ENCODE measurements at regions of chr17 and their contacts with region 1.

Region 1: GRCh38 chr17:47698749-47699535 is 5.0 kb downstream of the TBKBP1 start:
- DNase-seq: peak in 1 of 2 experiments; percentile 92
- H3K4me3 ChIP-seq: no peak overlapping the region
- H3K27ac ChIP-seq: no peak overlapping the region
- H3K4me1 ChIP-seq: peaks cover 0 to 9% (median 7%) of the 10 kb centered on the region in 4 experiments; a peak in 6 of 7 replicates
- H3K27me3 ChIP-seq: no peaks in the 10 kb centered on the region; a peak in 1 of 7 replicates
- CTCF ChIP-seq: peak; percentile 80 to 93 (median 91)
- EP300 ChIP-seq: no peak
- POLR2A ChIP-seq: no peak
- RAD21 ChIP-seq: peak; percentile 76 to 84

Region 2: GRCh38 chr17:47687748-47688147 is 11.2 kb before region 1 on chr17:
- CTCF ChIA-PET with region 1: interaction called, 36 read pairs
- POLR2A ChIA-PET with region 1: interaction called, 1,575 read pairs
- DNase-seq: peak in 1 of 2 experiments; percentile 63
- H3K4me3 ChIP-seq: no peak overlapping the region
- H3K27ac ChIP-seq: no peak overlapping the region
- H3K4me1 ChIP-seq: peaks cover 10 to 16% (median 13%) of the 10 kb centered on the region in 4 experiments
- H3K27me3 ChIP-seq: no peaks in the 10 kb centered on the region
- CTCF ChIP-seq: no peak
- EP300 ChIP-seq: no peak
- POLR2A ChIP-seq: 0 out of 3 replicates have a peak, but pooled peaks of 1 of the 2 experiments have one; percentile 32
- RAD21 ChIP-seq: 0 out of 4 replicates have a peak, but pooled peaks of 1 of the 2 experiments have one; percentile 2

Region 3: GRCh38 chr17:47708863-47709541 is 10.1 kb after region 1 on chr17:
- CTCF ChIA-PET with region 1: interaction called, 146 read pairs
- POLR2A ChIA-PET with region 1: interaction called, 4 read pairs
- DNase-seq: peak in 1 of 2 experiments; percentile 67
- H3K4me3 ChIP-seq: peak overlapping the region; percentile 21 to 57 (median 29); a peak in 7 of 8 replicates
- H3K27ac ChIP-seq: no peak overlapping the region
- H3K4me1 ChIP-seq: peaks cover 0 to 9% (median 3%) of the 10 kb centered on the region in 4 experiments; a peak in 5 of 7 replicates
- H3K27me3 ChIP-seq: peaks cover 0 to 19% (median 5%) of the 10 kb centered on the region in 4 experiments; a peak in 4 of 7 replicates
- CTCF ChIP-seq: no peak
- EP300 ChIP-seq: no peak
- POLR2A ChIP-seq: no peak
- RAD21 ChIP-seq: no peak

Region 4: GRCh38 chr17:47720754-47721533 is 22.0 kb after region 1 on chr17:
- CTCF ChIA-PET with region 1: interaction called, 441 read pairs
- POLR2A ChIA-PET with region 1: interaction called, 5 read pairs
- DNase-seq: peak in 1 of 2 experiments; percentile 69
- H3K4me3 ChIP-seq: peak overlapping the region in 1 of 4 experiments; percentile 46; a peak in 4 of 8 replicates
- H3K27ac ChIP-seq: no peak overlapping the region
- H3K4me1 ChIP-seq: peaks cover 0 to 23% (median 10%) of the 10 kb centered on the region in 4 experiments; a peak in 5 of 7 replicates
- H3K27me3 ChIP-seq: peaks cover 0 to 25% (median 22%) of the 10 kb centered on the region in 4 experiments; a peak in 6 of 7 replicates
- CTCF ChIP-seq: peak; percentile 17 to 38 (median 28); a peak in 2 of 4 replicates
- EP300 ChIP-seq: no peak
- POLR2A ChIP-seq: no peak
- RAD21 ChIP-seq: peak in 1 of 2 experiments; percentile 32; a peak in 2 of 4 replicates

Region 5: DNA sequence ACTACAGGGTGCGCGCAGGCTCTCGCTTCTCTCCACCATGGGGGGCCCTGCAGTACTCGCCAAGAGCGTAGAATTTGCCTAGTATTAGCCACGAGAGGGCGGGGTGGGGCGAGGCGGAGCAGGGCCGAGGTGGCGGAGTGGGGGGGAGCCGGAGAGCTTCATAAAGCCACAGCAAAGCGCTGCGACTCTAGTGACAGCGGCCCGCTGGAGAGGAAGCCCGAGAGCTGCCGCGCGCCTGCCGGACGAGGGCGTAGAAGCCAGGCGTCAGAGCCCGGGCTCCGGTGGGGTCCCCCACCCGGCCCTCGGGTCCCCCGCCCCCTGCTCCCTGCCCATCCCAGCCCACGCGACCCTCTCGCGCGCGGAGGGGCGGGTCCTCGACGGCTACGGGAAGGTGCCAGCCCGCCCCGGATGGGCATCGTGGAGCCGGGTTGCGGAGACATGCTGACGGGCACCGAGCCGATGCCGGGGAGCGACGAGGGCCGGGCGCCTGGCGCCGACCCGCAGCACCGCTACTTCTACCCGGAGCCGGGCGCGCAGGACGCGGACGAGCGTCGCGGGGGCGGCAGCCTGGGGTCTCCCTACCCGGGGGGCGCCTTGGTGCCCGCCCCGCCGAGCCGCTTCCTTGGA is 34.2 kb after region 1 on chr17 and contains the start of gene TBX21:
- CTCF ChIA-PET with region 1: interaction called, 441 read pairs
- POLR2A ChIA-PET with region 1: interaction called, 4 read pairs
- DNase-seq: peak in 1 of 2 experiments; percentile 78
- H3K4me3 ChIP-seq: peak within 1 kb of the TSS; percentile 28 to 57 (median 40)
- H3K27ac ChIP-seq: no peak within 1 kb of the TSS
- H3K4me1 ChIP-seq: peaks cover 0 to 3% (median 1%) of the 10 kb centered on the region in 4 experiments; a peak in 2 of 7 replicates
- H3K27me3 ChIP-seq: peaks cover 28 to 58% (median 50%) of the 10 kb centered on the region in 4 experiments
- CTCF ChIP-seq: peak in 1 of 3 experiments; percentile 33; a peak in 2 of 4 replicates
- EP300 ChIP-seq: no peak
- POLR2A ChIP-seq: no peak
- RAD21 ChIP-seq: peak in 1 of 2 experiments; percentile 20; a peak in 1 of 4 replicates
- total RNA-seq, gene TBX21: not detected in 2 replicates